ENCODE measurements at regions of chr7 and their contacts with region 1.

Region 1: DNA sequence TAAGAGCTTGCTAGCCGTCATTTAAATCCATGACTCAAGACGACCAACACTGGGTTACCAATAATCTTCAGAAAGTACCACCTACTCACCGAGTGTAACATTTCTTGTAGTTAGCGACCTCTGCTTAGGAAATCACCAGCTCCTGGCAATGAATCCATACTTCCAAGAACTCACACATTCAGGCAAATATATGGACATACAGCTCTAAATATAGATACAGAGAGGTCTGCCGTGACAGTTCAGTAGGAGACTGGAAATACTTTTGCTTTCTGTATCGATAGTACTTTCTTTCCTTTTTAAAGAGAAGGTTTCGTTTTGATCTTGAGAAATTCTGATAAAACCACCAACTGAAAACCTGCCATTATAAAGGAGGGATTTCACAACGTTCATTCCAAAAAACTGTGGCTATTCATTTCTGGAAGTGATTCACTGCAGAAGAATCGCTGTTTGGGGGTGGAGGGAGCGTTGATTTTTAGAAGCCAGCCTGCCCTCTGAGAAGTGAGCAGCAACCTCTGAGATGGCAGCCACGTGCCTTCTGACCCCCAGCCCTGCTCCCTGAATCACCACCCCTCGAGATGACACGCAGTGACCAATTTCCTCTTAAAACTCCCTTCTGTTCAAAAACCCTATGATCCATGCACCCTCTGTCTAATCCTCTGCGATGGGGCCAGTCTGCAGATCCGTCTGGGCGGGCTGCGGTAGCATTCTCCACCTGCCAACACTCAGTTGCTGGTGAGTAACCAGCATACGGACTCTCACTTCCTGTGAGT is 179.0 kb upstream of the KLF14 start:
- DNase-seq: peak; percentile 92
- H3K4me3 Mint-ChIP-seq: peak overlapping the region; percentile 81
- H3K27ac Mint-ChIP-seq: peak overlapping the region; percentile 97
- H3K4me1 Mint-ChIP-seq: peaks cover 91% of the 10 kb centered on the region
- H3K27me3 Mint-ChIP-seq: no peaks in the 10 kb centered on the region

Region 2: GRCh38 chr7:130838738-130839137 is 74.3 kb before region 1 on chr7:
- CTCF ChIA-PET with region 1: no interaction called
- intact Hi-C with region 1: loop called (anchors 2 kb)
- DNase-seq: peak; percentile 26
- H3K4me3 Mint-ChIP-seq: no peak overlapping the region
- H3K27ac Mint-ChIP-seq: no peak overlapping the region
- H3K4me1 Mint-ChIP-seq: peaks cover 23% of the 10 kb centered on the region
- H3K27me3 Mint-ChIP-seq: peaks cover 32% of the 10 kb centered on the region

Region 3: GRCh38 chr7:130943336-130943901 is 30.4 kb after region 1 on chr7:
- CTCF ChIA-PET with region 1: interaction called, 3 read pairs
- intact Hi-C with region 1: loop called (anchors 1 kb)
- DNase-seq: no peak
- H3K4me3 Mint-ChIP-seq: peak overlapping the region; percentile 62
- H3K27ac Mint-ChIP-seq: peak overlapping the region; percentile 90
- H3K4me1 Mint-ChIP-seq: peaks cover 91% of the 10 kb centered on the region
- H3K27me3 Mint-ChIP-seq: no peaks in the 10 kb centered on the region

Region 4: DNA sequence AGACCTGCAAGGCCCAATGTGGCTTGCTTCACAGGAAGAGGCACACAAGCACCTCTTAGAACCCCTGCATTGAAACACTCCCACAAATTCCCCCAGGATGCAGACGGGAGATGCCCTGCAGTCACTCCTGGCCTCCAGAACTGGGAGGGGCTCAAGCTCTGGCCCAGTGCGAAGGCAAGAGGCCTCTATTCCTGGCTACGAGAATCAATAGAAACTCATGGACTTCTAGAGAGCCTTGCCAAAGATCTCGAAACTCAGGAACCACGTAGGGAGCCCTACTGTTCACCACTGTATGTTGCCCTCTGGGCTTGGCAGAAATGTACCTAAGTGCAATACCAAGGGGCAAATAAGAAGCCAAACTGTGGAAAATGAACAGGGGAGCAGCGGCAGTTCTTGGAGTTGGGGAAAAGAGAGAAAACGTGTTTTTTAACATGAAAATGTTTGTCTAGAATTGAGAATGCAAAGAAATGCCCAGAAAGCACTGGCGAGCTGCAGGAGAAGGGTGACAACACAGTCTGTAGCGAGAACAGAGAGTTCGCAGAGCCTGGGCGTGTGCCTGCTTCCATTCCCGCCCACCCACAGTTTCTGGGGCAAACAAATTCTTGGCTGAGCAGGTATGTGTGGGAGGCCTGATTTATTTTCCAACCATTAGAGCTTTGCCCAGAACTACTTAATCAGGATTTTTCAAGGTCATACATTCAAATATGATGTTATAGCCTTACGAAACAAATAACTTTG is 81.5 kb after region 1 on chr7:
- CTCF ChIA-PET with region 1: no interaction called
- intact Hi-C with region 1: no loop called
- DNase-seq: no peak
- H3K4me3 Mint-ChIP-seq: peak overlapping the region; percentile 32
- H3K27ac Mint-ChIP-seq: peak overlapping the region; percentile 78
- H3K4me1 Mint-ChIP-seq: peaks cover 78% of the 10 kb centered on the region
- H3K27me3 Mint-ChIP-seq: no peaks in the 10 kb centered on the region

Region 5: GRCh38 chr7:131007394-131008330 is 94.6 kb after region 1 on chr7:
- CTCF ChIA-PET with region 1: interaction called, 3 read pairs
- intact Hi-C with region 1: loop called (anchors 1 kb)
- DNase-seq: peak; percentile 80
- H3K4me3 Mint-ChIP-seq: peak overlapping the region; percentile 52
- H3K27ac Mint-ChIP-seq: peak overlapping the region; percentile 91
- H3K4me1 Mint-ChIP-seq: peaks cover 86% of the 10 kb centered on the region
- H3K27me3 Mint-ChIP-seq: no peaks in the 10 kb centered on the region

Region 6: GRCh38 chr7:131188367-131189339 is 275.6 kb after region 1 on chr7:
- CTCF ChIA-PET with region 1: no interaction called
- intact Hi-C with region 1: loop called (anchors 2 kb)
- DNase-seq: peak; percentile 70
- H3K4me3 Mint-ChIP-seq: no peak overlapping the region
- H3K27ac Mint-ChIP-seq: peak overlapping the region; percentile 89
- H3K4me1 Mint-ChIP-seq: peaks cover 51% of the 10 kb centered on the region
- H3K27me3 Mint-ChIP-seq: no peaks in the 10 kb centered on the region